ENCODE measurements at regions of chr9 and their contacts with region 1.

Region 1: GRCh38 chr9:93231121-93231694 is 47.3 kb downstream of the WNK2 start:
- DNase-seq: peak; percentile 90 to 98 (median 96)
- ATAC-seq: peak; percentile 86 to 92 (median 90)
- H3K4me3 ChIP-seq: no peak overlapping the region
- H3K27ac ChIP-seq: peak overlapping the region; percentile 54 to 95 (median 87)
- H3K4me1 ChIP-seq: peaks cover 19 to 61% (median 50%) of the 10 kb centered on the region in 3 donors
- H3K27me3 ChIP-seq: no peaks in the 10 kb centered on the region
- CTCF ChIP-seq: no peak

Region 2: GRCh38 chr9:93198107-93198837 is 32.9 kb before region 1 on chr9:
- intact Hi-C with region 1: loop called in 1 of 3 experiments (anchors 5 kb)
- DNase-seq: peak in 5 of 6 donors; percentile 21 to 60 (median 45)
- ATAC-seq: no peak
- H3K4me3 ChIP-seq: no peak overlapping the region
- H3K27ac ChIP-seq: peak overlapping the region; percentile 28 to 77 (median 70)
- H3K4me1 ChIP-seq: peaks cover 49 to 53% (median 50%) of the 10 kb centered on the region in 3 donors
- H3K27me3 ChIP-seq: no peaks in the 10 kb centered on the region
- CTCF ChIP-seq: no peak